ENCODE measurements at regions of chr10 and their contacts with region 1.

Region 1: DNA sequence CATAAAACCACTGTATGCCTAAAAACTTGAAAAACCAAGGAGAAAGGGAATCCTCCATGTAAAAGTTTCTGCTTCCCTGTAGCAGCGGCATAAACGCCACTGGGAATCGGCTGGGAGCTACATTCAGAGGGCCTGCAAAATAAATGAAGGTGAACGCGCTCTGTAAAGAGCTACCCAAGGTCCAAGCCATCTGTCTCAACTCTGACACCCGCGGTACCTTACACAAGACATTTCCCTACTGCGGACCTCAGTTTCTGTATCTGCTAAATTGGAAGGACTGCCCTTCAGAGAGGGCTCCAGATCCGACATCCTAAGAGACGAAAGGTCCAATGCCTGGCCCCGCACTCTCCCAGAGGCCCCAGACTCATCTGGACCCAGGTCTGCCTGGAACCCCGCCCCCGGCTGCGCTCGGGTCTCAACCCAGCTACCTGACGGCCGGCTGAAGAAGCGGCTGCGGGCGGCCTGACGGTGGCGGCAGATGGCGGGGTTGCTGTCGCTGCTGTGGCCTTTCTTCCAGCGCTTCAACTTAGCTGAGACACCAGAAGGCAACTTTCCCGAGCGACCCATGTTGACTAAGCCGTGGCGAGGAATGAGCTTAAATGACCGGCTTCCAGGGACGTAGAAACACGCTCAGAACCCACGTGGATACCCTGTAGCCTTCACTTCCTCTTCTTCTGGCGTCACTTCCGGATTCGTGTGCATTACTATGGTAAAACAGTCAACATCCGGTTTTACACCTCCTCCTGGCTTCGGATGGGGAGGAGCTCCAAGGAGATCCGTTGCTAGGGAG is at the start of gene RRP12:
- DNase-seq: peak; percentile 99
- H3K4me3 ChIP-seq: peak within 1 kb of the TSS; percentile 65 to 93 (median 90)
- H3K27ac ChIP-seq: peak within 1 kb of the TSS; percentile 95 to 98
- H3K4me1 ChIP-seq: peaks cover 0 to 23% (median 17%) of the 10 kb centered on the region in 4 experiments
- H3K27me3 ChIP-seq: no peaks in the 10 kb centered on the region

Region 2: GRCh38 chr10:97388152-97388551 is 12.7 kb before region 1 on chr10:
- CTCF ChIA-PET with region 1: interaction called, 13 read pairs
- POLR2A ChIA-PET with region 1: interaction called, 3 read pairs
- DNase-seq: no peak
- H3K4me3 ChIP-seq: no peak overlapping the region
- H3K27ac ChIP-seq: no peak overlapping the region
- H3K4me1 ChIP-seq: no peaks in the 10 kb centered on the region
- H3K27me3 ChIP-seq: no peaks in the 10 kb centered on the region

Region 3: DNA sequence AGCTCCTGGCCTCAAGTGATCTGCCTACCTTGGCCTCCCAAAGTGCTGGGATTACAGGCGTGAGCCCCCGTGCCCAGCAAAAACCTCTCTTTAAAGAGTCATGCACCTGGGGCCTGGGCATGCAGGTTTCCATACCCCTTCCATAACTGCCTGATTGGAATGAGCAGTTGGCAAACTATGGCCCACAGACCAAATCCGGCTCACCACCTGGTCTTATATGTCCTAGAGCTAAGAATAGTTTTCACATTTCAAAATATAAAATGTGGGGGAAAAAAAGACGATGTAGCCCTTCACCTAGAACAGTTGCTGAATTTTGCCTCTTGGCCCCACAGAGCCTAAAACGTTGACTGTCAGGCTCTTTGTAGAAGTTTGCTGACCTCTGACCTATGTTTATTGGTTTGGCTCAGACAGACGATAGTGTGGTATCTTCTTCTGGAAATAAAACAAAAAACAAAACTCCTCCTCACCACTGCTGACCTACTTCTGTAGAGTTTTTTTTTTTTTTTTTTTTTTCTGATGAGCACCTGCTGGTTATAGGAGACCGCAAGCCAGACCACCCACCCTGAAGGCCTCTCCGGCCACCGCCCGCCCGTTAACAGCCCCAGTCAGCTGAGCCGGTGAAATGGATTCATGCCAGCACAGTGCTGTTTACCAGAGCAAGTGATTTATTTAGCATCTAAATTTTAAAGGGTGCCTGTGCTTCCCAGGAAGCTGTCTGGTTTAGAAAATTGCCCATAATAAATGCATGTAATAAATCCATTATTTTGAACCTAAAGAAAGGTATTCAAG is 404.4 kb after region 1 on chr10:
- CTCF ChIA-PET with region 1: no interaction called
- POLR2A ChIA-PET with region 1: no interaction called
- DNase-seq: no peak
- H3K4me3 ChIP-seq: no peak overlapping the region
- H3K27ac ChIP-seq: no peak overlapping the region
- H3K4me1 ChIP-seq: no peaks in the 10 kb centered on the region
- H3K27me3 ChIP-seq: peaks cover 0 to 12% (median 2%) of the 10 kb centered on the region in 5 experiments

Measured in common myeloid progenitor, CD34-positive (primary cell).